ENCODE measurements at regions of chr6 and their contacts with region 1.

Region 1: DNA sequence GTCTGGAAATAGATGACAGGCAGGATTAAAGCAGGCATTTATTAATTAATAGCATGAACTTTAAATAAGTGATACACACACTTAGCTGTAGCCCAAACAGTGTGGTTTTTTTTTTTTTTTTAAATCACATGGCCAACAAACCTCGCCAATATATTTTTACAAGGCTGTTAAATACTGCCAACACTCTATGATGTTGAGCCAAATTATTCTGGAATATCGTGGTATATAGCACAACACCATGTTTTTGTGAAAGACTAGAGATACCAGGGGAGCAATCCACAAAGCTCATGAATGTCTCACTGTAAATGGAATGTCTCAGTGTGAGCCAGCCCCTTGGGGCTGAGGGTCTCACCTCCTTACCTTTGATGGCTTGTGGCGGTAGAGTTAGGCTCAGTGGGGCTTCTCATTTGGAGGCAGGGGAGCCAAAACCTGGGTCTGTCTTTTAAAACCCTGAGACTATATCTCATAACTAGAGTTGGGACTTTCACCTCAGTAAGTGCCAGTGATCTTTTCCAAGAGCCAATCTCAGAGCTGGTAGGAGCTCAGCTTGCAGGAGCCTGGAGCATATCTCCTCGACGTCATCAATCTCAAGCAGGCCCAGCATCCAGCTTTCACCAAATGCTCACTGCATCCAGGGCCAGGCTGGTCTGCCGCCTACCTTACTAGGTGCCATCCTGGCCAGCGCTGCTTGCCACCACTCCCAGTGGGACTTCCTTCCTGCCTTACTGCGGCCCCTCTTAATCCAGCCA is 78.5 kb upstream of the FAM184A start:
- DNase-seq: no peak
- ATAC-seq: no peak
- H3K4me3 ChIP-seq: no peak overlapping the region
- H3K4me3 Mint-ChIP-seq: no peak overlapping the region
- H3K27ac ChIP-seq: no peak overlapping the region
- H3K27ac Mint-ChIP-seq: no peak overlapping the region
- H3K4me1 ChIP-seq: no peaks in the 10 kb centered on the region
- H3K4me1 Mint-ChIP-seq: no peaks in the 10 kb centered on the region
- H3K27me3 ChIP-seq: peaks cover 0 to 18% of the 10 kb centered on the region in 2 experiments
- H3K27me3 Mint-ChIP-seq: peaks cover 5 to 9% of the 10 kb centered on the region in 2 donors

Region 2: GRCh38 chr6:119145111-119145510 is 11.8 kb before region 1 on chr6:
- CTCF ChIA-PET with region 1: no interaction called
- POLR2A ChIA-PET with region 1: no interaction called
- DNase-seq: no peak
- ATAC-seq: peak; percentile 32 to 64 (median 48)
- H3K4me3 ChIP-seq: no peak overlapping the region
- H3K4me3 Mint-ChIP-seq: no peak overlapping the region
- H3K27ac ChIP-seq: no peak overlapping the region
- H3K27ac Mint-ChIP-seq: peak overlapping the region in 1 of 2 donors; percentile 73
- H3K4me1 ChIP-seq: peaks cover 3 to 8% of the 10 kb centered on the region in 2 experiments
- H3K4me1 Mint-ChIP-seq: peaks cover 10 to 23% (median 12%) of the 10 kb centered on the region in 3 donors
- H3K27me3 ChIP-seq: no peaks in the 10 kb centered on the region
- H3K27me3 Mint-ChIP-seq: peaks cover 0 to 11% of the 10 kb centered on the region in 2 donors

Region 3: GRCh38 chr6:119856136-119856535 is 699.2 kb after region 1 on chr6:
- CTCF ChIA-PET with region 1: no interaction called
- POLR2A ChIA-PET with region 1: interaction called in 1 of 2 experiments, 14 read pairs
- DNase-seq: peak in 2 of 35 experiments; percentile 0 to 22
- ATAC-seq: peak in 3 of 4 experiments; percentile 43 to 55 (median 45)
- H3K4me3 ChIP-seq: peak overlapping the region in 1 of 2 donors; percentile 20
- H3K4me3 Mint-ChIP-seq: peak overlapping the region; percentile 58 to 76 (median 58)
- H3K27ac ChIP-seq: no peak overlapping the region
- H3K27ac Mint-ChIP-seq: no peak overlapping the region
- H3K4me1 ChIP-seq: no peaks in the 10 kb centered on the region
- H3K4me1 Mint-ChIP-seq: peaks cover 9 to 14% (median 14%) of the 10 kb centered on the region in 3 donors
- H3K27me3 ChIP-seq: no peaks in the 10 kb centered on the region
- H3K27me3 Mint-ChIP-seq: no peaks in the 10 kb centered on the region

Measured in T-cell (primary cell).